PC-9 (cell line): ENCODE measurements at regions of chr3 and their contacts with region 1.

Region 1: GRCh38 chr3:112773864-112774590 is 72.6 kb downstream of the CD200R1L start:
- DNase-seq: peak; percentile 88 to 96
- H3K4me3 ChIP-seq: no peak overlapping the region
- H3K27ac ChIP-seq: peak overlapping the region; percentile 88
- H3K4me1 ChIP-seq: peaks cover 80% of the 10 kb centered on the region
- H3K27me3 ChIP-seq: no peaks in the 10 kb centered on the region
- CTCF ChIP-seq: no peak

Region 2: GRCh38 chr3:112709911-112710310 is 64.1 kb before region 1 on chr3:
- CTCF ChIA-PET with region 1: no interaction called
- POLR2A ChIA-PET with region 1: no interaction called
- intact Hi-C with region 1: no loop called
- DNase-seq: no peak
- H3K4me3 ChIP-seq: no peak overlapping the region
- H3K27ac ChIP-seq: no peak overlapping the region
- H3K4me1 ChIP-seq: 0 out of 2 replicates have a peak, but pooled peaks cover 4% of the 10 kb centered on the region
- H3K27me3 ChIP-seq: no peaks in the 10 kb centered on the region
- CTCF ChIP-seq: no peak

Region 3: DNA sequence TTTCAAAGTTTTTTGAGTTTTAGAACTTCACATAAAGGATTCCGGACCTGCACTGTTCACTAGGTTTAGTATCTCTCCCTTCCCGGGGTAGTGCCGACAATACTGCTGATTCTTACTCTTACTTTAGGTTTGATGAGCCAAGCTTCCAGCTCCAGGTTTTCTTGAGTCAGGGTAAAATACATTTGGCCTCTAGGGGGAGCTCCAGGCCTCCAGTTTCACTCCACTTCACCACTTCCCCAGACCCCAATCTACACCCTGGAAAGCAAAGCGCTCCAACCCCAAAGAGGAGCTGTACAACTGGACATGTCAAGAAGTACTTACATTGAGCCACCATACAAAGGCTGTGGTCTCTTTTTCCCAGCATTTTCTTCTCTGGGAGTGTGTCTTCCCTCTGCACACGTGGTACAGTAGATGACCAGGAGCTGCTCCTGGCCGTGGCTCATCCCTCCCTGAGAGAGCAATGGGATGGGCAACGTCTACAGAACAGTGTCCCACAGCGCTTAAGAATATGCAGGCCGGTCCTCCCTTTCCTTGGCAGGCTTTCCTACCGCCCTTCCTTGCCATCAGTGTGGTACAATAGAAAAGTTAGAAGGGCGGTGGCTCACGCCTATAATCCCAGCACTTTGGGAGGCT is 39.2 kb before region 1 on chr3:
- CTCF ChIA-PET with region 1: interaction called, 10 read pairs
- POLR2A ChIA-PET with region 1: interaction called, 6 read pairs
- intact Hi-C with region 1: loop called (anchors 1 kb)
- DNase-seq: peak; percentile 44 to 63
- H3K4me3 ChIP-seq: no peak overlapping the region
- H3K27ac ChIP-seq: no peak overlapping the region
- H3K4me1 ChIP-seq: peaks cover 58% of the 10 kb centered on the region
- H3K27me3 ChIP-seq: no peaks in the 10 kb centered on the region
- CTCF ChIP-seq: peak; percentile 86

Region 4: GRCh38 chr3:112751564-112752512 is 22.2 kb before region 1 on chr3:
- CTCF ChIA-PET with region 1: interaction called, 11 read pairs
- POLR2A ChIA-PET with region 1: interaction called, 7 read pairs
- intact Hi-C with region 1: loop called (anchors 1 kb)
- DNase-seq: peak; percentile 25 to 89
- H3K4me3 ChIP-seq: no peak overlapping the region
- H3K27ac ChIP-seq: peak overlapping the region; percentile 48
- H3K4me1 ChIP-seq: peaks cover 45% of the 10 kb centered on the region
- H3K27me3 ChIP-seq: no peaks in the 10 kb centered on the region
- CTCF ChIP-seq: no peak

Region 5: GRCh38 chr3:112799946-112800345 is 25.9 kb after region 1 on chr3:
- CTCF ChIA-PET with region 1: interaction called, 16 read pairs
- POLR2A ChIA-PET with region 1: interaction called, 5 read pairs
- intact Hi-C with region 1: loop called (anchors 1 kb)
- DNase-seq: peak; percentile 8 to 80
- H3K4me3 ChIP-seq: no peak overlapping the region
- H3K27ac ChIP-seq: peak overlapping the region; percentile 88
- H3K4me1 ChIP-seq: peaks cover 46% of the 10 kb centered on the region
- H3K27me3 ChIP-seq: no peaks in the 10 kb centered on the region
- CTCF ChIP-seq: no peak

Region 6: DNA sequence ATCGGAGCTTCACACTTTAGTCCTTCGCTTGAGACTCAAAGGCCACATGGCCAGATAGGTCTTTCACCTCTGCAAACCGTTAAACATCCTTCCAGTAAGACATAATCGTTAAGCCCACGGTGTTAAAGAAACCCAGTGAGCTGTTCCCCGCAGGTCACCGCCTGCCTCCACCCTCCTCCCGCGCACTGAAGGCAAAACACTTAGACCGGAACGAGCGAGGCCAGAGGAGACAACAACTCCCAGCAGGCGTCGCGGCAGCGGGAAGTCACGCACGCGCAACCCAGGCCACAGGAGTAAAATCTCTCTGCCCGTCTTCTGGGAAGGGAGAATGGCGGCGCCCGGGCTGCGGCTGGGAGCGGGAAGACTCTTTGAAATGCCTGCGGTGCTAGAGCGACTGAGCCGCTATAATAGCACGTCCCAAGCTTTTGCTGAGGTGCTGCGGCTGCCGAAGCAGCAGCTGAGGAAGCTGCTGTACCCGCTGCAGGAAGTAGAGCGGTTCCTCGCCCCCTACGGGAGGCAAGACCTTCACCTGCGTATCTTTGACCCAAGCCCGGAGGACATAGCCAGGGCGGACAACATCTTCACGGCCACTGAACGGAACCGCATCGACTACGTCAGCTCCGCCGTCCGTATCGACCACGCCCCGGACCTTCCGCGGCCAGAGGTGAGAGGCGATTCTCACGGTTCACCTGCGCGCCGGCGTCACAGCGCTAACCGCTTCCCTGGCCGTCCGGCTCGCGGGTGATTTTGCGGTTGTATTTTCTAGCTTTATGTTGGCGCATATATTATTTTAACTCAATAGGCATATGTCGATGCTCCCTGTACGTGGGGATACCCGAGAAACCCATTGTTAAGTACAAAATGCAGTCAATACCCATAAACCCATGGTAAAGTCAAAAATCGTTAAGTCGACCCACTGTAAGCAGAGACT is 216.9 kb after region 1 on chr3 and contains the start of gene GTPBP8:
- CTCF ChIA-PET with region 1: interaction called, 3 read pairs
- POLR2A ChIA-PET with region 1: no interaction called
- intact Hi-C with region 1: loop called (anchors 1 kb)
- DNase-seq: peak; percentile 87 to 90
- H3K4me3 ChIP-seq: peak within 1 kb of the TSS; percentile 95
- H3K27ac ChIP-seq: peak within 1 kb of the TSS; percentile 98
- H3K4me1 ChIP-seq: peaks cover 29% of the 10 kb centered on the region
- H3K27me3 ChIP-seq: no peaks in the 10 kb centered on the region
- CTCF ChIP-seq: peak; percentile 25; the same call in 1 of the 2 replicates
- total RNA-seq, gene GTPBP8: 27.9 and 34.3 TPM in 2 replicates

Region 7: GRCh38 chr3:113428581-113428980 is 654.6 kb after region 1 on chr3:
- CTCF ChIA-PET with region 1: no interaction called
- POLR2A ChIA-PET with region 1: no interaction called
- intact Hi-C with region 1: no loop called
- DNase-seq: no peak
- H3K4me3 ChIP-seq: no peak overlapping the region
- H3K27ac ChIP-seq: no peak overlapping the region
- H3K4me1 ChIP-seq: no peaks in the 10 kb centered on the region
- H3K27me3 ChIP-seq: no peaks in the 10 kb centered on the region
- CTCF ChIP-seq: no peak